ENCODE measurements at regions of chr6 and their contacts with region 1.

Region 1: DNA sequence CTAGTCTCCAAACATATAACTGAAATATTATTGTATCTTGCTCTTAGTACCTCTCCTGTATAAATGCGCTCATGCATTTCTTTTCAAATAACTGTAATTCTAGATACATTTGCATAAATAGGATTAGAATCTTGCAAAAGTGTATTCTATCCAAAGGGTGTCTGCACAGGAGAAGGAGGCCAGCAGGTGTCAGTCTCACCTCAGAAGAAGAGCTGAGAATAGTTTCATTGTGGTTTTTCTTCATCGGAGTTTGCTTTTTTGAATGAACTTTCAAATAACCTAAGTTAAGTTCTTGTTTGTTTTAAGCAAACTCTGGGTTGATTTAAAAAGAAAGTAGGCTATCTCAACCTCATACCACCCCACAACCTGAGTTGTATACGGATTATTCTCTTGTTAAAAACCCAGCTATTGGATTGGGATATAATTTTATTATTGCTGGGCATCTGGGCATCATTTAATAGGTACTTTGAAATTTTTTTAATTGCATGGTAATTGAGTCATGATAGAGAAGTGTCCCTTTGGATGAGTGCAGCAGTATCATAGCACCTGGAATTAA is 125.0 kb upstream of the MLIP start:
- DNase-seq: peak; percentile 46
- ATAC-seq: peak; percentile 51
- H3K4me3 Mint-ChIP-seq: no peak overlapping the region
- H3K27ac Mint-ChIP-seq: peak overlapping the region; percentile 37; the same call in 1 of the 2 replicates
- H3K4me1 Mint-ChIP-seq: peaks cover 25% of the 10 kb centered on the region
- H3K27me3 Mint-ChIP-seq: no peaks in the 10 kb centered on the region
- CTCF ChIP-seq: 0 out of 2 replicates have a peak, but pooled peaks have one; percentile 37

Region 2: GRCh38 chr6:52144201-52145076 is 1841.8 kb before region 1 on chr6:
- CTCF ChIA-PET with region 1: no interaction called
- POLR2A ChIA-PET with region 1: no interaction called
- DNase-seq: no peak
- ATAC-seq: no peak
- H3K4me3 Mint-ChIP-seq: no peak overlapping the region
- H3K27ac Mint-ChIP-seq: no peak overlapping the region
- H3K4me1 Mint-ChIP-seq: no peaks in the 10 kb centered on the region
- H3K27me3 Mint-ChIP-seq: no peaks in the 10 kb centered on the region; the same call in 1 of the 2 replicates
- CTCF ChIP-seq: no peak

Region 3: DNA sequence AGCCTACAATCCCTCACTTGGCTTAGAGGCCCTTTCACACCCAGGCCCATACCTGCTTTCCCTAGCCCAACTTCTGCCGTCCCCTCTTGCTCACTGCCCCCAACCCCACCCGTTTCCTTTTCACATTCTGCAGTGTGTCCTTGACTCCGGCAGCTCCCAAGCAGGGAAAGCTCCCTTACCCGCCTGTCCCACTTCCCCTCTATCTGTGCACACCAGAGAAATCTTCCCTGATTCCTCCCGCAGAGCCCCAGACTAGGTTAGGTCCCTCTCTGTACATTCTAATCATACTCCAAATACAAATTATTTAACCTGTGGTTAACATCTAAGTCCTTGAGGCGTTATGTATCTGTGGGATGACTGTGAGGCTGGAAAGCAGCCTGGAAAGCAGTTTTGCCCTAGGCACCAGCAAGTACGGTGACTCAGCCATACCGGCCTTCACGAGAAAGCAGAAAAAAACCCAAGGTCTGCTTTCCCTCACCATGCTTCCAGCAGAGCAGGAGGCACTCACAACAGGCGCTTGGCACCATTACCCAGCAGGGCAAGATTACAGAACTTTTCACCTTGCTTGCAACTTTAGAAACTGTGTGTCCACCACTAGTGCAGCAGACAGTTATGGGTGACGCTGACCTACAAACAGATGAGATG is 659.7 kb before region 1 on chr6:
- CTCF ChIA-PET with region 1: no interaction called
- POLR2A ChIA-PET with region 1: no interaction called
- DNase-seq: no peak
- ATAC-seq: peak; percentile 51
- H3K4me3 Mint-ChIP-seq: no peak overlapping the region
- H3K27ac Mint-ChIP-seq: peak overlapping the region; percentile 31
- H3K4me1 Mint-ChIP-seq: peaks cover 50% of the 10 kb centered on the region
- H3K27me3 Mint-ChIP-seq: no peaks in the 10 kb centered on the region
- CTCF ChIP-seq: no peak

Region 4: GRCh38 chr6:54244430-54244829 is 258.2 kb after region 1 on chr6:
- CTCF ChIA-PET with region 1: interaction called, 26 read pairs
- POLR2A ChIA-PET with region 1: no interaction called
- DNase-seq: no peak
- ATAC-seq: no peak
- H3K4me3 Mint-ChIP-seq: no peak overlapping the region
- H3K27ac Mint-ChIP-seq: no peak overlapping the region
- H3K4me1 Mint-ChIP-seq: no peaks in the 10 kb centered on the region
- H3K27me3 Mint-ChIP-seq: no peaks in the 10 kb centered on the region
- CTCF ChIP-seq: no peak

Region 5: GRCh38 chr6:54267798-54268197 is 281.6 kb after region 1 on chr6:
- CTCF ChIA-PET with region 1: interaction called, 35 read pairs
- POLR2A ChIA-PET with region 1: no interaction called
- DNase-seq: peak; percentile 24
- ATAC-seq: peak; percentile 73
- H3K4me3 Mint-ChIP-seq: no peak overlapping the region
- H3K27ac Mint-ChIP-seq: no peak overlapping the region
- H3K4me1 Mint-ChIP-seq: peaks cover 5% of the 10 kb centered on the region
- H3K27me3 Mint-ChIP-seq: peaks cover 8% of the 10 kb centered on the region
- CTCF ChIP-seq: peak; percentile 32; the same call in 1 of the 2 replicates

Measured in WTC11 (cell line).